Motor neuron (in vitro differentiated cells): ENCODE measurements at regions of chr2 and their contacts with region 1.

Region 1: GRCh38 chr2:47339745-47340541 is 63.0 kb upstream of the MSH2 start:
- ATAC-seq: no peak
- H3K4me3 ChIP-seq: no peak overlapping the region
- H3K27ac ChIP-seq: no peak overlapping the region
- H3K4me1 ChIP-seq: peaks cover 8 to 9% of the 10 kb centered on the region in 2 donors

Region 2: DNA sequence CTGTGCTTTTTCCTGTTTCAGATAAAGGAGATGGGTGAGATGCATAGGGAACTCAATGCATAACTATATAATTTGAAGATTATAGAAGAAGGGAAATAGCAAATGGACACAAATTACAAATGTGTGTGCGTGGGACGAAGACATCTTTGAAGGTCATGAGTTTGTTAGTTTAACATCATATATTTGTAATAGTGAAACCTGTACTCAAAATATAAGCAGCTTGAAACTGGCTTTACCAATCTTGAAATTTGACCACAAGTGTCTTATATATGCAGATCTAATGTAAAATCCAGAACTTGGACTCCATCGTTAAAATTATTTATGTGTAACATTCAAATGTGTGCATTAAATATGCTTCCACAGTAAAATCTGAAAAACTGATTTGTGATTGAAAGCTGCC is 46.6 kb after region 1 on chr2:
- in situ Hi-C with region 1: loop called in 1 of 9 experiments (anchors 5 kb)
- ATAC-seq: no peak
- H3K4me3 ChIP-seq: no peak overlapping the region
- H3K27ac ChIP-seq: no peak overlapping the region
- H3K4me1 ChIP-seq: no peaks in the 10 kb centered on the region

Region 3: GRCh38 chr2:47767880-47768609 is 428.1 kb after region 1 on chr2:
- in situ Hi-C with region 1: loop called in 1 of 9 experiments (anchors 10 kb)
- ATAC-seq: peak; percentile 83 to 98 (median 94)
- H3K4me3 ChIP-seq: no peak overlapping the region
- H3K27ac ChIP-seq: no peak overlapping the region
- H3K4me1 ChIP-seq: peaks cover 0 to 9% of the 10 kb centered on the region in 2 donors